Activated CD8-positive, alpha-beta memory T cell treated with anti-CD3 and anti-CD28 coated beads, Interleukin-2, amount 10 ng/mL, durations not matched to agents 7 days and 5 days (primary cell): ENCODE measurements at regions of chr7 and their contacts with region 1.

Region 1: DNA sequence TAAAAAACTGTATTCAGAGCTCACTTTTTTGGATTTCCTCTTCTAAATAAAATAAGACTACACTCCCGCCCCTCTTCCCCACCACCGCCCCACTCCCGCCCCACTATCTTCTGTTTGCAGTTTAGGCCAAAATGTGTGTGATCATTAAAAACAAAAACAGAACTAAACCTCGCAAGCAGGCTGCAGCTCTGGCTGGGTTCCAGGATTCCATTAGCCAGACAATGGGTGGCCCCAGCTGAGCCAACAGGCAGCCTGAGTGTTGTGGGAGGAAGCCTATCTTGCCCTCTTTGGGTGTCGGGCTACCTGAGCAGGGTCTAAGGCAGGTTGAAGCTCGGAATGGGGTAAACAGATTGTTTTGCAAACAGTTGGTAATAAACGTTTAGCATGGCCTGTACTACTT is 41.7 kb downstream of the ARL4A start:
- DNase-seq: no peak
- ATAC-seq: no peak
- H3K4me3 Mint-ChIP-seq: no peak overlapping the region
- H3K27ac Mint-ChIP-seq: no peak overlapping the region
- H3K4me1 Mint-ChIP-seq: peaks cover 20% of the 10 kb centered on the region
- H3K27me3 Mint-ChIP-seq: no peaks in the 10 kb centered on the region

Region 2: GRCh38 chr7:12539681-12540080 is 189.4 kb before region 1 on chr7:
- CTCF ChIA-PET with region 1: no interaction called
- DNase-seq: no peak
- ATAC-seq: no peak
- H3K4me3 Mint-ChIP-seq: no peak overlapping the region
- H3K27ac Mint-ChIP-seq: no peak overlapping the region
- H3K4me1 Mint-ChIP-seq: no peaks in the 10 kb centered on the region
- H3K27me3 Mint-ChIP-seq: peaks cover 12% of the 10 kb centered on the region

Region 3: GRCh38 chr7:12715372-12716133 is 13.6 kb before region 1 on chr7:
- CTCF ChIA-PET with region 1: interaction called, 12 read pairs
- DNase-seq: peak; percentile 79
- ATAC-seq: peak; percentile 97
- H3K4me3 Mint-ChIP-seq: peak overlapping the region; percentile 38
- H3K27ac Mint-ChIP-seq: peak overlapping the region; percentile 77
- H3K4me1 Mint-ChIP-seq: peaks cover 41% of the 10 kb centered on the region
- H3K27me3 Mint-ChIP-seq: no peaks in the 10 kb centered on the region